ENCODE measurements at regions of chr10 and their contacts with region 1.

Region 1: DNA sequence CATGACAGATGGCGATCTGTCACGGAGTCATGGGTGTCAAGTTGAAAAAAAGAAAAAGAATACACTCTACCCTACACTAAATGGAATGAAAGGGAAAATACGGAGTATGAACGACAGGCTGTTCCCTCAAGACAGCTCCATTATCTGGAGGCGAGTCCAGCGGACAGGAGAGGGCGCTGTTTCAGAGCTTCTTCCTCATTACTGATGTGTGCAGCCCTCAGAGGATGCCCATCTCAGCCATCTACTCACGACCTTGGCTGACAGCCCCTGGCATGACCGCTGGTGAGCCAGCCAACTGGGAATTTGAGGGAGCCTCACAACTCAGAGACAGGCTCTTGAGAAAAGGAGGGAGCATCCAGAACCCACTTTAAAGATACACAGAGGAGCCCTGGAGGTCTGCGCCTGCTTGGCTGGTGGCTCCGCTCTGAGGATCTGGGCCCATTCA is 49.6 kb upstream of the SMNDC1 start:
- DNase-seq: peak; percentile 85
- ATAC-seq: peak; percentile 76
- H3K4me3 ChIP-seq: peak overlapping the region; percentile 27 to 36
- H3K27ac ChIP-seq: 0 out of 2 replicates have a peak overlapping the region, but pooled peaks have one; percentile 6
- H3K4me1 ChIP-seq: peaks cover 58 to 68% of the 10 kb centered on the region in 2 experiments
- H3K27me3 ChIP-seq: no peaks in the 10 kb centered on the region
- CTCF ChIP-seq: peak in 2 of 3 experiments; percentile 97; a peak in 4 of 6 replicates
- POLR2A ChIP-seq: no peak
- RAD21 ChIP-seq: no peak

Region 2: GRCh38 chr10:110335314-110336064 is 18.9 kb before region 1 on chr10:
- CTCF ChIA-PET with region 1: interaction called, 12 read pairs
- POLR2A ChIA-PET with region 1: no interaction called
- RAD21 ChIA-PET with region 1: interaction called in 1 of 2 experiments, 3 read pairs
- intact Hi-C with region 1: no loop called
- DNase-seq: no peak
- ATAC-seq: no peak
- H3K4me3 ChIP-seq: no peak overlapping the region
- H3K27ac ChIP-seq: no peak overlapping the region
- H3K4me1 ChIP-seq: no peaks in the 10 kb centered on the region
- H3K27me3 ChIP-seq: no peaks in the 10 kb centered on the region
- CTCF ChIP-seq: no peak
- POLR2A ChIP-seq: no peak
- RAD21 ChIP-seq: no peak

Region 3: DNA sequence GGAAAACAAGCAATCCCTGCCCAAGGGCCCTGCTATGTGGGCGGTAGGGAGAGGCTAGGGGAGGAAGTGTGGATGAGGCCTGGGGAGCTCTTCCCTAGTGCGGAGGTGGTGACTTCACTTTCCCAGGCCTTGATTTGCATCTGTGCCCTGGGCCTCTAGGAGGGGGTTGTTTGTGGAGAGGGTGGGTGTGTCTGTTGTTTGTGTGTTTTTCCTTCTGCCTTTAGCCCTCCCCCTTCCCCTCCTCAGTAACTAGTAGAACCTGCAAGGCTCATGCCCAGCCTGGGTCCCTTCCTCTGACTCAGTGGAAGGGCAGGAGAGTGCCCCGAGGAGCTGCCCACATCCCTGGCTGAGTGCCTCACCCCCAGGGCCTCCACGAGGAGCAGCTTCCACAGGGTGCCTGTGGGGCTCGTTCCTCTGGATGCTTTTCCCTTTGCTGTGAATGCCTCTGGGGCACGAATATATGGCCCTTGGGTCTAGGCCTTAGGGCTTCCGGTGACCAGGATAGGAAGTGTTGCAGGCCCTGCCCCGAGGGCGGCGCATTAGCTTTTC is 53.9 kb after region 1 on chr10:
- CTCF ChIA-PET with region 1: interaction called, 14 read pairs
- POLR2A ChIA-PET with region 1: interaction called, 7 read pairs
- RAD21 ChIA-PET with region 1: interaction called in 1 of 2 experiments, 3 read pairs
- intact Hi-C with region 1: loop called (anchors 5 kb)
- DNase-seq: no peak
- ATAC-seq: peak; percentile 9; the same call in 1 of the 2 replicates
- H3K4me3 ChIP-seq: peak overlapping the region in 1 of 2 experiments; percentile 5; a peak in 1 of 4 replicates
- H3K27ac ChIP-seq: peak overlapping the region; percentile 95
- H3K4me1 ChIP-seq: peaks cover 63 to 88% of the 10 kb centered on the region in 2 experiments
- H3K27me3 ChIP-seq: no peaks in the 10 kb centered on the region
- CTCF ChIP-seq: no peak
- POLR2A ChIP-seq: no peak
- RAD21 ChIP-seq: no peak

Region 4: DNA sequence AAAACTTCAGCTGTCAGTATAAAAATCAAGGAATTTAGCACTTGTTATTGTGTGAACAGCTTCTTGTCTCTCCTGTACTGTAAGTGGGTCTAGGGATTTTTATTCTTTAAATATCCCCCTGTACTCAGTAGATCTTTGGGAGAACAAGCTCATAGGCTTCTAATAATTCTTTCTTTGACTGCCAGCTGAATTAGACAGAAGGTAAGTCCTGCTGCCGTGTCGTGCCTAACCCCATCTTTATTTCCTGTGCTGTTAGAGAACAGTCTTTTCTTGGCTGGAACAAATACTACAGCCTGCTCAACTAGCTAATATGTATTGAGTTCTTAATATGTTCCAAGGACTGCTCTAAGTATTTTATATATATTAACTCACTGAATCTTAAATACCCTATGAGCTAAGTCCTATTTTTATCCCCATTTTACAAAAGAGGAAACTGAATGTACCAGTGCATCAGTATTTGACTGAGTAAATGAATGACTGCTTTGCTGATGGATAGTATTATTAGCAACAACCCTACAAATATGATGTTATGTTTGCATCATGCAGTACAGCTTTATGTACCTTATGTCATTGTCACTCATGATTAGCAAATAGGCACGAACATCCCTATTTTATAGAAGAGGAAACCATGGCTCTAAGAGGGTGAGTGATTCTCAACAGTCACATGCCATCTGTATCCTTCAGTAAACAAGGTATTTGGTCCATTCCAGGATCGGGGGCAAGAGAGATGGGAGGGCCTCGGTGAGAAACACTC is 137.9 kb after region 1 on chr10:
- CTCF ChIA-PET with region 1: interaction called, 5 read pairs
- POLR2A ChIA-PET with region 1: interaction called, 10 read pairs
- RAD21 ChIA-PET with region 1: interaction called in 1 of 2 experiments, 7 read pairs
- intact Hi-C with region 1: loop called (anchors 1 kb)
- DNase-seq: no peak
- ATAC-seq: no peak
- H3K4me3 ChIP-seq: no peak overlapping the region
- H3K27ac ChIP-seq: no peak overlapping the region
- H3K4me1 ChIP-seq: peaks cover 21 to 59% of the 10 kb centered on the region in 2 experiments
- H3K27me3 ChIP-seq: no peaks in the 10 kb centered on the region
- CTCF ChIP-seq: no peak
- POLR2A ChIP-seq: no peak
- RAD21 ChIP-seq: no peak

Region 5: GRCh38 chr10:110547139-110547761 is 192.9 kb after region 1 on chr10:
- CTCF ChIA-PET with region 1: interaction called, 12 read pairs
- POLR2A ChIA-PET with region 1: no interaction called
- RAD21 ChIA-PET with region 1: interaction called in 1 of 2 experiments, 3 read pairs
- intact Hi-C with region 1: loop called (anchors 1 kb)
- DNase-seq: peak; percentile 66
- ATAC-seq: peak; percentile 85
- H3K4me3 ChIP-seq: no peak overlapping the region
- H3K27ac ChIP-seq: no peak overlapping the region
- H3K4me1 ChIP-seq: peaks cover 0 to 7% of the 10 kb centered on the region in 2 experiments; a peak in 2 of 4 replicates
- H3K27me3 ChIP-seq: no peaks in the 10 kb centered on the region
- CTCF ChIP-seq: peak; percentile 82 to 98 (median 91)
- POLR2A ChIP-seq: no peak
- RAD21 ChIP-seq: peak; percentile 98

Measured in HCT116 (cell line).